ENCODE measurements at regions of chr1 and their contacts with region 1.

Region 1: DNA sequence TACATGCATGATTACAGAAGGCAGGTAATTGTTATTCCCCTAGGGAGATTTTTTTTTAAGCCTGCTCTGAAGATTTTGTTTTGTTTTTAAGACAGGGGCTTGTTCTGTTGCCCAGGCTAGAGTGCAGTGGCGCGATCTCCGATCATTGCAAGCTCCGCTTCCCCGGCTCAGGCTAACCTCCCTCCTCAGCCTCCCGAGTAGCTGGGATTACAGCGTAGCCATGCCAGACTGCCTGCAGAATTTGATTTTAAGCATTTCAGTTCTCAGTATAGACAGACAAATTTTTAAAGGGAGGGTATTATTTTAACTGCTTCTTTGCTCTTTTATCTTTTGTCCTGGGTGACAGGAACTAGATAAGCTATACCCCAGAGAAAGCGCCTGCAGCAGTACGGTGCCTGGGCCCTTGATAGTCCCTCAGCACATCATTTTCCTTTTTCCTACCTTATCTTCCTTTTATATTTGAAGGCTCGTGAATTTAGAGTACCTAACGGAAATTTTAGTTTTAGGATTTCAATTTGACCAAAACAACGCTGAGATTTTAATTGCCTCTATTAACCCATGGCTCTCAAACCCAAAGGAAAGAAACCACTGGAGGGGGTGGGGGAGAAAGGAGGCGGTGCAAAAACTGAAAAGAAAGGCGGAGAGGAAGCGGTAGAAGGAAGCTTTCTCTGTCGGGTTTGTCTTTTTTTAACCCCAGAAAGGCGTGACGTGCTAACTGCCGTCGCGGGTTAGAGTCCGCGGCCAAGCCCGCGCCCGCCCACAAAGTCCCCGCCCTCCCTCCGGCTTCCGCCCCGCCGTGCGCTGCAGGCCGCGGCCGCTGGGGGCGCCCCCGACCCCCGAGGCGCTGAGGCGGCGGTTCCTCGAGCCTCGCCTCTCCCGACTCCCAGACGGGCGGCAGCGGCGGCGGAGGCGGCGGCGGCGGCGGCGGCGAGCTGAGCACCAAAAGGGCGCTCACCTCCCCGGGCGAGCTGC is at the start of gene EEIG2:
- DNase-seq: peak; percentile 88 to 92 (median 90)
- H3K4me3 ChIP-seq: peak within 1 kb of the TSS; percentile 15 to 59
- H3K4me3 Mint-ChIP-seq: peak within 1 kb of the TSS; percentile 91 to 98 (median 96)
- H3K27ac ChIP-seq: peak within 1 kb of the TSS; percentile 65
- H3K27ac Mint-ChIP-seq: peak within 1 kb of the TSS; percentile 90 to 97 (median 95)
- H3K4me1 ChIP-seq: peaks cover 49% of the 10 kb centered on the region
- H3K4me1 Mint-ChIP-seq: peaks cover 25 to 45% (median 28%) of the 10 kb centered on the region in 4 donors
- H3K27me3 ChIP-seq: no peaks in the 10 kb centered on the region
- H3K27me3 Mint-ChIP-seq: no peaks in the 10 kb centered on the region
- total RNA-seq, gene EEIG2: 9.2 to 10.7 TPM

Region 2: GRCh38 chr1:108512239-108512981 is 47.1 kb before region 1 on chr1:
- CTCF ChIA-PET with region 1: interaction called, 225 read pairs
- POLR2A ChIA-PET with region 1: interaction called, 32 read pairs
- intact Hi-C with region 1: loop called (anchors 1 kb)
- DNase-seq: peak; percentile 35 to 58 (median 53)
- H3K4me3 ChIP-seq: no peak overlapping the region
- H3K4me3 Mint-ChIP-seq: no peak overlapping the region
- H3K27ac ChIP-seq: no peak overlapping the region
- H3K27ac Mint-ChIP-seq: no peak overlapping the region
- H3K4me1 ChIP-seq: no peaks in the 10 kb centered on the region
- H3K4me1 Mint-ChIP-seq: no peaks in the 10 kb centered on the region
- H3K27me3 ChIP-seq: no peaks in the 10 kb centered on the region
- H3K27me3 Mint-ChIP-seq: peaks cover 3 to 5% of the 10 kb centered on the region in 2 donors

Region 3: DNA sequence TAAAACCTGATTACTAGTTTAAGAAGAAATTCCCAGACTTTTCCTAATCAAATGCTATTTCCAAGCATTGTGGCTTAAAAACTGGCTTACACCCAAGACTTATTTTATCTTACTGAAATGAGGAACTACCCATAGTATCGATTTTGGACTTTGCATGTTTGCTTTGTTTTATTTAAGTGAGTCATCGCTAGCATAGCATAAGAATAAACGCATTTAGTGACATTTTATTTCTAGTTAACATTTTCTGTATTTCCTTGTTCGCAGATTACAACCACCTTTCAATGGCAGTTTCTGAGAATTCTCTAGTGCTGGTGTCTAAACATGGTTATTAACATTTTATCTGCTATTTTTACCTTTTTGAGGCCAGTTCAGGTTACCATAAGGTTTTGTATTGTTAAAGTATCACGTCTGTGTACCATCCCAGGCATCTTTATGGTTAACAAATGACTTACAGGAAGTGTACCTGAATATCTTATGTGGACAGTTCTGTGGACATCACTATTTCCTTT is 24.9 kb after region 1 on chr1:
- CTCF ChIA-PET with region 1: interaction called, 22 read pairs
- POLR2A ChIA-PET with region 1: interaction called, 4 read pairs
- intact Hi-C with region 1: no loop called
- DNase-seq: no peak
- H3K4me3 ChIP-seq: no peak overlapping the region
- H3K4me3 Mint-ChIP-seq: no peak overlapping the region
- H3K27ac ChIP-seq: no peak overlapping the region
- H3K27ac Mint-ChIP-seq: peak overlapping the region in 2 of 7 donors; percentile 7 to 14
- H3K4me1 ChIP-seq: peaks cover 26% of the 10 kb centered on the region
- H3K4me1 Mint-ChIP-seq: peaks cover 28 to 42% (median 36%) of the 10 kb centered on the region in 4 donors
- H3K27me3 ChIP-seq: no peaks in the 10 kb centered on the region
- H3K27me3 Mint-ChIP-seq: no peaks in the 10 kb centered on the region

Region 4: GRCh38 chr1:108661030-108661620 is 101.6 kb after region 1 on chr1 and contains the start of gene HENMT1:
- CTCF ChIA-PET with region 1: interaction called, 7 read pairs
- POLR2A ChIA-PET with region 1: interaction called, 44 read pairs
- intact Hi-C with region 1: no loop called
- DNase-seq: peak; percentile 88 to 90 (median 88)
- H3K4me3 ChIP-seq: peak within 1 kb of the TSS; percentile 47 to 79
- H3K4me3 Mint-ChIP-seq: peak within 1 kb of the TSS; percentile 80 to 88 (median 86)
- H3K27ac ChIP-seq: peak within 1 kb of the TSS; percentile 97
- H3K27ac Mint-ChIP-seq: peak within 1 kb of the TSS; percentile 96 to 98 (median 98)
- H3K4me1 ChIP-seq: peaks cover 25% of the 10 kb centered on the region
- H3K4me1 Mint-ChIP-seq: peaks cover 18 to 41% (median 29%) of the 10 kb centered on the region in 4 donors
- H3K27me3 ChIP-seq: no peaks in the 10 kb centered on the region
- H3K27me3 Mint-ChIP-seq: no peaks in the 10 kb centered on the region
- total RNA-seq, gene HENMT1: 19.1 to 19.3 TPM

Region 5: DNA sequence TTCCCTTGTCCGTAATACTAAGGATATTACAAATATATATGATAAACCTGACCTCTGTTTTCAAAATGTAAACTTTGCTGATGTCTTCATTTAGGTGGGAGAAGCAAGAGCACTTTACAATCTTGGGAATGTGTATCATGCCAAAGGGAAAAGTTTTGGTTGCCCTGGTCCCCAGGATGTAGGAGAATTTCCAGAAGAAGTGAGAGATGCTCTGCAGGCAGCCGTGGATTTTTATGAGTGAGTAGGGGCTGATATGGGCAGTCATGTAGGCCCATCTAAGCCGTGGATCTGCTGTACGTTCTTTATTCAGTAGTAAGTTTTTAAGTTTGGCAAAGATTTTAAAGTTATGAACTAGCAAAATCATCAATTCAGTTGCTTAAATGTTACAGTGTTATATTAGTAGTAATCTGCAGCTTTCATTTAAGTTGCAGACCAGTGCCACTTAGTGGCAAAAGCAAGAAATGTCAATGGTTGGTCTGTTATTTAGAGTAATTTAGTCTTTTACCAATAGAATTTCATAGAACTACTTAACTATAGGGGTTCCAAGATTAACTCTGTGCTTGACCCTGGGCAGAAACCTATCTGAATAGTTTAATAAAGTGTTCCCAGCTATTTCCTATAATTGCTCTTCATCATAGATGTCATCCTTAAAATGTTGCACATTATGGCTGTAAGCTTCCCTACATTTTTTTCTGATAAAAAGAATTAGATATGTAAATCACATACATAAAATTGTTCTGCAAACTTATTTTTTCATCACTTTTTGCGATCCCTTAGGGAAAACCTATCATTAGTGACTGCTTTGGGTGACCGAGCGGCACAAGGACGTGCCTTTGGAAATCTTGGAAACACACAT is 338.6 kb after region 1 on chr1:
- CTCF ChIA-PET with region 1: no interaction called
- POLR2A ChIA-PET with region 1: no interaction called
- intact Hi-C with region 1: loop called (anchors 2 kb)
- DNase-seq: peak; percentile 43 to 63 (median 55)
- H3K4me3 ChIP-seq: no peak overlapping the region
- H3K4me3 Mint-ChIP-seq: no peak overlapping the region
- H3K27ac ChIP-seq: no peak overlapping the region
- H3K27ac Mint-ChIP-seq: peak overlapping the region in 1 of 7 donors; percentile 38
- H3K4me1 ChIP-seq: no peaks in the 10 kb centered on the region
- H3K4me1 Mint-ChIP-seq: peaks cover 0 to 1% (median 0%) of the 10 kb centered on the region in 4 donors
- H3K27me3 ChIP-seq: no peaks in the 10 kb centered on the region
- H3K27me3 Mint-ChIP-seq: no peaks in the 10 kb centered on the region

Measured in CD4-positive, alpha-beta memory T cell (primary cell).